Activated naive CD4-positive, alpha-beta T cell treated with anti-CD3 and anti-CD28 coated beads for 36 hours (primary cell): ENCODE measurements at regions of chr3 and their contacts with region 1.

Region 1: GRCh38 chr3:155701882-155702465 is 42.9 kb downstream of the PLCH1 start:
- DNase-seq: no peak
- H3K4me3 Mint-ChIP-seq: no peak overlapping the region
- H3K27ac Mint-ChIP-seq: no peak overlapping the region
- H3K4me1 Mint-ChIP-seq: peaks cover 2% of the 10 kb centered on the region
- H3K27me3 Mint-ChIP-seq: peaks cover 5% of the 10 kb centered on the region

Region 2: GRCh38 chr3:154334973-154335420 is 1367.0 kb before region 1 on chr3:
- CTCF ChIA-PET with region 1: no interaction called
- intact Hi-C with region 1: loop called (anchors 1 kb)
- DNase-seq: no peak
- H3K4me3 Mint-ChIP-seq: no peak overlapping the region
- H3K27ac Mint-ChIP-seq: no peak overlapping the region
- H3K4me1 Mint-ChIP-seq: no peaks in the 10 kb centered on the region
- H3K27me3 Mint-ChIP-seq: peaks cover 3% of the 10 kb centered on the region

Region 3: DNA sequence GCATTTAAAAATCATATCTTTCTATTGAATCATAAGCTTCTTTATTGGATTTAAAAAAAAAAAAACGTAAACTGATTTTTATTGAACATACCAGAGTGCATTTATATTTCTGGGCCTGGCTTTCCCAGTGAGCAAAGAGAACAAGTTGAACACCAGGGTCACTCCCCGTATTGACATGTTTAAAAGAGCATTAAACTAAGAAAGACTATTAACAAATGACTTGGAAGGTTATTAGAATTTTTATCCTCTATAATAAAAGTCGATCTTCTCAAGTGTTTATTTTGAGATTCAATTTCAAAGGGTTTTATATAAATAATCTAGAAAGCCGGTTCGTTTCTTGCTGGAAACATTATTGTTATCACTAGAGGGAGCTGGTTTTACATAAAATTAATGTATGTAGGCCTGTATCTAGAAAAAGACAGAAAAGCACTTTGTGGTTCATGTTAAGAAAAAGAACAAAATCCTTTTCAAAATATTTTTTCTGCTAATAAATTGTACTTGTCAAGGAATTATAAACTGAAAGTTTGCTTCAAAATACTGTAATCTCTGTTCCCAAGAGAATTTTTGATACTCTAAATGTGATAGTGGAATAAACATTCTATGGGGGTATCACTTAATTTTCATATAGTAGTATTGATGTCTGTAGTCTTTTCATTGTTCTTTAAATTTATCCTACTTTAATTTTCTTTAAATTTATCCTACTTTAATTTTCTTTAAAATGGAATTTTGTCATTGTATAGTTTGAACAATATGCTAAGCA is 943.7 kb before region 1 on chr3:
- CTCF ChIA-PET with region 1: no interaction called
- intact Hi-C with region 1: loop called (anchors 5 kb)
- DNase-seq: no peak
- H3K4me3 Mint-ChIP-seq: no peak overlapping the region
- H3K27ac Mint-ChIP-seq: no peak overlapping the region
- H3K4me1 Mint-ChIP-seq: no peaks in the 10 kb centered on the region
- H3K27me3 Mint-ChIP-seq: no peaks in the 10 kb centered on the region

Region 4: GRCh38 chr3:155352900-155353490 is 349.0 kb before region 1 on chr3:
- CTCF ChIA-PET with region 1: interaction called, 42 read pairs
- intact Hi-C with region 1: loop called (anchors 1 kb)
- DNase-seq: no peak
- H3K4me3 Mint-ChIP-seq: no peak overlapping the region
- H3K27ac Mint-ChIP-seq: no peak overlapping the region
- H3K4me1 Mint-ChIP-seq: no peaks in the 10 kb centered on the region
- H3K27me3 Mint-ChIP-seq: peaks cover 9% of the 10 kb centered on the region

Region 5: DNA sequence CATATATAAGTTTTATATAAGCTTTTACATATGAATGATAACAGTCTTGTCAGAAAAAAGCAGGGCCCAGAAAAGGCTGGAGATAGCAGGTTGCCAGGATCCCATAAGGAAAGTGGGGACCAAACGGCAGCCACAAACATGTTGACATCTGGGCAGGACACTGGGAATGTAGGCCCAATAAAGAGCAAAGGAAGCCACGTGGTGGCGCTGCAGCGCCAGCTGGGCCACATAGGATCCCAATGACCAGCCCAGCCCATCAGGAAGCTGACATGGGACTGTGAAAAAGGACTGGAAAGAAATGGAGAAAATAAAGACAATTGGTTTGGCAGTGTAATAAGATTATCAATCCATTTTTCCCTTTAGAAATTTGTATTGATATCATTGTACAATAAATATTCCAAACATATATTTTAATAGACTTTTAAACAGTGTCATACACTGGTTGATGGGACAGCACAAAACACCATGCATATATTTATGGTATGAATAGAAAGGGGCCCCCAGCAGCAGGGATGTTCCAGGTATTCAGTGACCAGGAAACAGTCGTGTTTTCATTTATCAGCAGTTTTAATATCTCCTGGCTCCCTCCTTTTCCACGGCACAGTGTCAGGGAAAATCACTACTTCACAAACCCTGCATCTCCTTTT is 319.5 kb before region 1 on chr3:
- CTCF ChIA-PET with region 1: interaction called, 8 read pairs
- intact Hi-C with region 1: loop called (anchors 1 kb)
- DNase-seq: peak; percentile 19
- H3K4me3 Mint-ChIP-seq: no peak overlapping the region
- H3K27ac Mint-ChIP-seq: no peak overlapping the region
- H3K4me1 Mint-ChIP-seq: no peaks in the 10 kb centered on the region
- H3K27me3 Mint-ChIP-seq: peaks cover 7% of the 10 kb centered on the region

Region 6: GRCh38 chr3:155712008-155712407 is 10.0 kb after region 1 on chr3:
- CTCF ChIA-PET with region 1: interaction called, 14 read pairs
- intact Hi-C with region 1: no loop called
- DNase-seq: no peak
- H3K4me3 Mint-ChIP-seq: no peak overlapping the region
- H3K27ac Mint-ChIP-seq: no peak overlapping the region
- H3K4me1 Mint-ChIP-seq: no peaks in the 10 kb centered on the region
- H3K27me3 Mint-ChIP-seq: no peaks in the 10 kb centered on the region

Region 7: GRCh38 chr3:155766206-155766605 is 64.2 kb after region 1 on chr3:
- CTCF ChIA-PET with region 1: no interaction called
- intact Hi-C with region 1: no loop called
- DNase-seq: no peak
- H3K4me3 Mint-ChIP-seq: no peak overlapping the region
- H3K27ac Mint-ChIP-seq: no peak overlapping the region
- H3K4me1 Mint-ChIP-seq: peaks cover 5% of the 10 kb centered on the region
- H3K27me3 Mint-ChIP-seq: no peaks in the 10 kb centered on the region

Region 8: GRCh38 chr3:155978324-155978723 is 276.4 kb after region 1 on chr3:
- CTCF ChIA-PET with region 1: no interaction called
- intact Hi-C with region 1: no loop called
- DNase-seq: no peak
- H3K4me3 Mint-ChIP-seq: no peak overlapping the region
- H3K27ac Mint-ChIP-seq: no peak overlapping the region
- H3K4me1 Mint-ChIP-seq: no peaks in the 10 kb centered on the region
- H3K27me3 Mint-ChIP-seq: no peaks in the 10 kb centered on the region

Region 9: GRCh38 chr3:156106721-156107373 is 404.9 kb after region 1 on chr3:
- CTCF ChIA-PET with region 1: no interaction called
- intact Hi-C with region 1: no loop called
- DNase-seq: no peak
- H3K4me3 Mint-ChIP-seq: no peak overlapping the region
- H3K27ac Mint-ChIP-seq: no peak overlapping the region
- H3K4me1 Mint-ChIP-seq: no peaks in the 10 kb centered on the region
- H3K27me3 Mint-ChIP-seq: no peaks in the 10 kb centered on the region